Adrenal gland (tissue), 19 donors: ENCODE measurements at regions of chr2 and their contacts with region 1.

Region 1: GRCh38 chr2:25131567-25132298 is 36.6 kb downstream of the POMC start:
- DNase-seq: peak in 2 of 7 donors; percentile 27 to 53
- H3K4me3 ChIP-seq: peak overlapping the region in 1 of 4 donors; percentile 45
- H3K27ac ChIP-seq: no peak overlapping the region
- H3K4me1 ChIP-seq: no peaks in the 10 kb centered on the region
- H3K27me3 ChIP-seq: peaks cover 6% of the 10 kb centered on the region
- CTCF ChIP-seq: no peak
- POLR2A ChIP-seq: no peak

Region 2: GRCh38 chr2:24409700-24410556 is 721.8 kb before region 1 on chr2:
- intact Hi-C with region 1: loop called in 1 of 2 experiments (anchors 10 kb)
- DNase-seq: peak; percentile 21 to 74 (median 45)
- H3K4me3 ChIP-seq: no peak overlapping the region
- H3K27ac ChIP-seq: no peak overlapping the region
- H3K4me1 ChIP-seq: no peaks in the 10 kb centered on the region
- H3K27me3 ChIP-seq: no peaks in the 10 kb centered on the region
- CTCF ChIP-seq: peak; percentile 73 to 88 (median 80)
- POLR2A ChIP-seq: no peak

Region 3: GRCh38 chr2:24971536-24972314 is 160.0 kb before region 1 on chr2 and contains the start of gene DNAJC27:
- intact Hi-C with region 1: loop called (anchors 2 to 5 kb)
- DNase-seq: peak; percentile 98 to 99 (median 98)
- H3K4me3 ChIP-seq: peak within 1 kb of the TSS; percentile 36 to 94 (median 70)
- H3K27ac ChIP-seq: peak within 1 kb of the TSS; percentile 95 to 98 (median 97)
- H3K4me1 ChIP-seq: peaks cover 8 to 32% of the 10 kb centered on the region in 2 donors
- H3K27me3 ChIP-seq: no peaks in the 10 kb centered on the region
- CTCF ChIP-seq: no peak
- POLR2A ChIP-seq: peak; percentile 94 to 96
- total RNA-seq, gene DNAJC27: 2.1 to 10.8 (median 7.3) TPM

Region 4: GRCh38 chr2:24977631-24978030 is 154.1 kb before region 1 on chr2:
- intact Hi-C with region 1: loop called (anchors 2 to 5 kb)
- DNase-seq: no peak
- H3K4me3 ChIP-seq: no peak overlapping the region
- H3K27ac ChIP-seq: no peak overlapping the region
- H3K4me1 ChIP-seq: peaks cover 3 to 21% of the 10 kb centered on the region in 2 donors
- H3K27me3 ChIP-seq: no peaks in the 10 kb centered on the region
- CTCF ChIP-seq: no peak
- POLR2A ChIP-seq: no peak

Region 5: GRCh38 chr2:25041928-25042320 is 89.8 kb before region 1 on chr2 and contains the start of gene EFR3B:
- intact Hi-C with region 1: loop called in 1 of 2 experiments (anchors 5 kb)
- DNase-seq: peak; percentile 95 to 98 (median 97)
- H3K4me3 ChIP-seq: peak within 1 kb of the TSS; percentile 49 to 89 (median 64)
- H3K27ac ChIP-seq: peak within 1 kb of the TSS in 4 of 5 donors; percentile 49 to 75 (median 68)
- H3K4me1 ChIP-seq: peaks cover 10 to 20% of the 10 kb centered on the region in 2 donors
- H3K27me3 ChIP-seq: no peaks in the 10 kb centered on the region
- CTCF ChIP-seq: peak in 3 of 6 experiments; percentile 14 to 23 (median 15)
- POLR2A ChIP-seq: peak; percentile 30 to 33
- total RNA-seq, gene EFR3B: 1.8 to 10.6 (median 2.7) TPM

Region 6: GRCh38 chr2:25286025-25286400 is 154.3 kb after region 1 on chr2:
- intact Hi-C with region 1: no loop called
- DNase-seq: no peak
- H3K4me3 ChIP-seq: no peak overlapping the region
- H3K27ac ChIP-seq: peak overlapping the region in 1 of 5 donors; percentile 53
- H3K4me1 ChIP-seq: peaks cover 16 to 33% of the 10 kb centered on the region in 2 donors
- H3K27me3 ChIP-seq: no peaks in the 10 kb centered on the region
- CTCF ChIP-seq: no peak
- POLR2A ChIP-seq: no peak